CD4-positive, alpha-beta memory T cell (primary cell): ENCODE measurements at regions of chr16 and their contacts with region 1.

Region 1: GRCh38 chr16:2919511-2920255 is 8.0 kb downstream of the FLYWCH1 start:
- DNase-seq: peak; percentile 47 to 68 (median 62)
- H3K4me3 ChIP-seq: no peak overlapping the region
- H3K4me3 Mint-ChIP-seq: no peak overlapping the region
- H3K27ac ChIP-seq: no peak overlapping the region
- H3K27ac Mint-ChIP-seq: peak overlapping the region; percentile 50 to 90 (median 78)
- H3K4me1 ChIP-seq: no peaks in the 10 kb centered on the region
- H3K4me1 Mint-ChIP-seq: peaks cover 5 to 12% (median 6%) of the 10 kb centered on the region in 4 donors
- H3K27me3 ChIP-seq: no peaks in the 10 kb centered on the region
- H3K27me3 Mint-ChIP-seq: no peaks in the 10 kb centered on the region

Region 2: GRCh38 chr16:2838928-2839327 is 80.8 kb before region 1 on chr16:
- CTCF ChIA-PET with region 1: interaction called, 9 read pairs
- POLR2A ChIA-PET with region 1: no interaction called
- intact Hi-C with region 1: loop called (anchors 1 kb)
- DNase-seq: peak; percentile 39 to 64 (median 47)
- H3K4me3 ChIP-seq: no peak overlapping the region
- H3K4me3 Mint-ChIP-seq: peak overlapping the region in 2 of 8 donors; percentile 18 to 26
- H3K27ac ChIP-seq: no peak overlapping the region
- H3K27ac Mint-ChIP-seq: peak overlapping the region in 5 of 7 donors; percentile 15 to 72 (median 64)
- H3K4me1 ChIP-seq: peaks cover 35% of the 10 kb centered on the region
- H3K4me1 Mint-ChIP-seq: peaks cover 16 to 58% (median 33%) of the 10 kb centered on the region in 4 donors
- H3K27me3 ChIP-seq: no peaks in the 10 kb centered on the region
- H3K27me3 Mint-ChIP-seq: peaks cover 0 to 7% of the 10 kb centered on the region in 2 donors

Region 3: DNA sequence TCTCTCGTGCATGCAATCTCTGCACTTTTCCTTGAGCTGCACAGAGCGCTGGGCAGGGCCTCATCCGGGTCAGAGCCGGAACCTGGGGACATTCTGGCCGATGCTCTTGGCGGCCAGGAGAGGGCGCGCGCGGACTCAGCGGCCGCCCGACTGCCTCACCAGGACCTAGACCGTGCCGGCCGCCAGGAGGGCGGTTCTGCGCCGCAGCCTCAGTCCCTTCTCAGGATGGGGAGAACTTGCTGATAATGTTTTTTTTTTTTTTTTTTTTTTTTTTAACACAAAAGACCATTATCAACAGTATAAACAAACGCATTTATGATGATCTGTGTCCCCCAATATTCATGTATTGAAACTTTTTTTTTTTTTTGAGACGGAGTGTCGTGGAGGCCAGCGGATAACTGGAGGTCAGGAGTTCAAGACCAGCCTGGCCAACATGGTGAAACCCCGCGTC is 44.7 kb before region 1 on chr16:
- CTCF ChIA-PET with region 1: interaction called, 16 read pairs
- POLR2A ChIA-PET with region 1: no interaction called
- intact Hi-C with region 1: loop called (anchors 1 kb)
- DNase-seq: peak; percentile 53 to 64 (median 57)
- H3K4me3 ChIP-seq: no peak overlapping the region
- H3K4me3 Mint-ChIP-seq: no peak overlapping the region
- H3K27ac ChIP-seq: no peak overlapping the region
- H3K27ac Mint-ChIP-seq: peak overlapping the region in 3 of 7 donors; percentile 12 to 71 (median 68)
- H3K4me1 ChIP-seq: peaks cover 4% of the 10 kb centered on the region
- H3K4me1 Mint-ChIP-seq: peaks cover 0 to 4% (median 2%) of the 10 kb centered on the region in 4 donors
- H3K27me3 ChIP-seq: no peaks in the 10 kb centered on the region
- H3K27me3 Mint-ChIP-seq: peaks cover 0 to 2% of the 10 kb centered on the region in 2 donors

Region 4: GRCh38 chr16:2987839-2988238 is 68.2 kb after region 1 on chr16:
- CTCF ChIA-PET with region 1: no interaction called
- POLR2A ChIA-PET with region 1: no interaction called
- intact Hi-C with region 1: no loop called
- DNase-seq: no peak
- H3K4me3 ChIP-seq: no peak overlapping the region
- H3K4me3 Mint-ChIP-seq: no peak overlapping the region
- H3K27ac ChIP-seq: no peak overlapping the region
- H3K27ac Mint-ChIP-seq: no peak overlapping the region
- H3K4me1 ChIP-seq: peaks cover 5% of the 10 kb centered on the region
- H3K4me1 Mint-ChIP-seq: peaks cover 0 to 6% (median 2%) of the 10 kb centered on the region in 4 donors
- H3K27me3 ChIP-seq: no peaks in the 10 kb centered on the region
- H3K27me3 Mint-ChIP-seq: peaks cover 0 to 2% of the 10 kb centered on the region in 2 donors

Region 5: GRCh38 chr16:3059000-3059722 is 139.5 kb after region 1 on chr16:
- CTCF ChIA-PET with region 1: no interaction called
- POLR2A ChIA-PET with region 1: no interaction called
- intact Hi-C with region 1: no loop called
- DNase-seq: peak; percentile 76 to 90 (median 85)
- H3K4me3 ChIP-seq: peak overlapping the region; percentile 23 to 89
- H3K4me3 Mint-ChIP-seq: peak overlapping the region; percentile 90 to 95 (median 94)
- H3K27ac ChIP-seq: peak overlapping the region; percentile 89
- H3K27ac Mint-ChIP-seq: peak overlapping the region; percentile 89 to 95 (median 92)
- H3K4me1 ChIP-seq: peaks cover 79% of the 10 kb centered on the region
- H3K4me1 Mint-ChIP-seq: peaks cover 36 to 74% (median 58%) of the 10 kb centered on the region in 4 donors
- H3K27me3 ChIP-seq: no peaks in the 10 kb centered on the region
- H3K27me3 Mint-ChIP-seq: no peaks in the 10 kb centered on the region